Activated naive CD4-positive, alpha-beta T cell treated with anti-CD3 and anti-CD28 coated beads for 36 hours (primary cell): ENCODE measurements at regions of chr9 and their contacts with region 1.

Region 1: GRCh38 chr9:88049677-88050352 is 75.5 kb upstream of the CDK20 start:
- DNase-seq: no peak
- H3K4me3 Mint-ChIP-seq: no peak overlapping the region
- H3K27ac Mint-ChIP-seq: peak overlapping the region; percentile 41
- H3K4me1 Mint-ChIP-seq: peaks cover 11% of the 10 kb centered on the region
- H3K27me3 Mint-ChIP-seq: peaks cover 11% of the 10 kb centered on the region

Region 2: GRCh38 chr9:88076286-88077090 is 26.7 kb after region 1 on chr9:
- CTCF ChIA-PET with region 1: interaction called, 3 read pairs
- intact Hi-C with region 1: loop called (anchors 1 kb)
- DNase-seq: peak; percentile 62
- H3K4me3 Mint-ChIP-seq: peak overlapping the region; percentile 76
- H3K27ac Mint-ChIP-seq: no peak overlapping the region
- H3K4me1 Mint-ChIP-seq: peaks cover 9% of the 10 kb centered on the region
- H3K27me3 Mint-ChIP-seq: peaks cover 54% of the 10 kb centered on the region